Sigmoid colon (tissue), 7 donors: ENCODE measurements at regions of chr1 and their contacts with region 1.

Region 1: DNA sequence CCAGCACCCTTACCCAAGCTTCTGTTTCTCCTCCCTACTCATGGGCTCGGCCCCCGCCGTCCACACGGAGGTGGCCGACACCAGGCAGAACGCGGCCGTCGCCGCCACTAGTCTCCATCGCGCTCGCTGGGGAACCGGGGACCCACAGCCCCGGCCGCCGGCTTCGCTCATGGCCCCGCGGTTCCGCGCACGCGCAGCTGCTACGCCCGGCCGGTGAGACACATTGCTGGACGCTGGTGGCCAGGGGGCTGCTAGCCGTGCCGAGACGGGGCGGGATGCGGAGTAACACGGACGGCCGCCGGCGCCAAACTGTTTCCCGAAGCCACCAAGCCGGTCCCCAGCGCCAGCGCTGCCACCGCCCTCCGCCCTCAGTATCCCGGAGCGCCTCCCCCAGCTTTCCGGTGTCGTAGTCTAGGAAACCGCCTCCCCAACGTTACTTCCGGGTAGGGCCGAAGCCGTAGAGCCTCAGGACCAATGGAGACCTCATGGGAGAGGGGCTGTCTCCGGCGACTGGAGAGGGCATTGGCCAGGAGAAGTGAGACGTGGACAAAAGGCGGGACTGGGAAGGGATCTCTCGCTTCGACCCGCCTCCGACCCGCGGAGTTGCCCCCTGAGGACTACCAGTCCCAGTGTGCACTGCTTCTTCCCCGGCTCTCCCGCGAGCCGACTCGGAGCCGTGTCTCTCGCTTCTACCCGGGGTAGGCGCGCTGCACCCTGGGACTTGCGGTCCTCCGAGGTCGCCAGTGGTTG is at the start of gene EDEM3:
- DNase-seq: peak; percentile 100
- H3K4me3 ChIP-seq: peak within 1 kb of the TSS; percentile 80 to 96 (median 93)
- H3K27ac ChIP-seq: peak within 1 kb of the TSS; percentile 93 to 98 (median 96)
- H3K4me1 ChIP-seq: peaks cover 0 to 24% (median 15%) of the 10 kb centered on the region in 4 donors
- H3K27me3 ChIP-seq: no peaks in the 10 kb centered on the region
- CTCF ChIP-seq: no peak
- EP300 ChIP-seq: no peak
- POLR2A ChIP-seq: peak; percentile 92 to 97
- total RNA-seq, gene EDEM3: 21.4 to 29.3 (median 25.6) TPM

Region 2: GRCh38 chr1:184982002-184982954 is 227.6 kb after region 1 on chr1:
- intact Hi-C with region 1: loop called (anchors 2 kb)
- DNase-seq: peak; percentile 91
- H3K4me3 ChIP-seq: no peak overlapping the region
- H3K27ac ChIP-seq: peak overlapping the region in 1 of 4 donors; percentile 55
- H3K4me1 ChIP-seq: peaks cover 0 to 10% (median 4%) of the 10 kb centered on the region in 4 donors
- H3K27me3 ChIP-seq: no peaks in the 10 kb centered on the region
- CTCF ChIP-seq: peak; percentile 87 to 91 (median 89)
- EP300 ChIP-seq: no peak
- POLR2A ChIP-seq: no peak

Region 3: DNA sequence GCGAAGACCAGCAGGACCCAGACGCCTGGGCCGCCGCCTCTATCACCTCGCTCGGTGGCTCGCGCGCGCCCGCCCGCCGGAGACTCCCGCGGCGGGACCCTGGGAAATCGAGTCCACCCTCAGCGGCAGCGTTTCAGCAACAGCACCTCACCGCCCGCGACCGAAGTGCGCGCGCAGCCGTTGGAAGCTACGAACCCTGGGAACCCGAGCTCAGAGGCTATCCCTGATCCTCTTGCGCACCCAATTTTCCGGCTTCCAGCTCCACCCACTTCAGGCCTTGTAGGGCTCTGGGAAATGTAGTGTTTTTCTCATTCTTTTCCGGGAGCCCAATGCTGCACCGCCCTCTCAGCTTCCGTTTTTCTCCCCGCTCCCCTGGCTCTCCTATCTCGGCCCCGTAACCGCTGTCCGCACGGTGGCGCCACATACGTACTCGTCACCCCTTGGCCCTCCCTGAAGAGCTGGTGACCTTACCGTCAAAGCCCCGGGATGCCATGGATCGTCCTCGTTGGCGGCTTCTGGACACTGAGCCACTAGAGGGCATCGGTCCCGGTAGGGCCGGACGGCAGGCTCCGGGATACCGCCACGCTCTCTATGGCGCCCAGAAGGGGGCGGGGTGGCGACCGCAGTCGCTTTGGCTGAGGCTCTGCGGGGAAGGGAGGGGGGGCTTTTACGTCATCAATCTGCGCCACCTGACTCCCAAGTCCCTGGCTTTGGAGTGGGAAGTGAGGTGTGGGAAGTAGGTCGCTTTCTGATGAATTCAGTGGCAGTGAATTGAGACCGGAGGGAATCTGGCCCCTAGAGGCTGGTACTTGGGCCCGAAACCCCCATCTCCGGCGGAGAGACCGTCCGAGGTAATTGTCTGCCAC is 1620.7 kb after region 1 on chr1 and contains the starts of genes ODR4 and TPR:
- intact Hi-C with region 1: loop called (anchors 10 kb)
- DNase-seq: peak; percentile 99
- H3K4me3 ChIP-seq: peak within 1 kb of the TSS; percentile 77 to 89 (median 82)
- H3K27ac ChIP-seq: peak within 1 kb of the TSS; percentile 91 to 97 (median 96)
- H3K4me1 ChIP-seq: peaks cover 0 to 41% (median 28%) of the 10 kb centered on the region in 4 donors
- H3K27me3 ChIP-seq: no peaks in the 10 kb centered on the region
- CTCF ChIP-seq: peak; percentile 83 to 98 (median 90)
- EP300 ChIP-seq: peak in 1 of 4 donors; percentile 30
- POLR2A ChIP-seq: peak; percentile 56 to 66
- total RNA-seq, gene ODR4: 9.0 to 24.4 (median 18.5) TPM
- total RNA-seq, gene TPR: 63.2 to 80.6 (median 72.1) TPM